Testis (tissue), 5 donors: ENCODE measurements at regions of chr3 and their contacts with region 1.

Region 1: DNA sequence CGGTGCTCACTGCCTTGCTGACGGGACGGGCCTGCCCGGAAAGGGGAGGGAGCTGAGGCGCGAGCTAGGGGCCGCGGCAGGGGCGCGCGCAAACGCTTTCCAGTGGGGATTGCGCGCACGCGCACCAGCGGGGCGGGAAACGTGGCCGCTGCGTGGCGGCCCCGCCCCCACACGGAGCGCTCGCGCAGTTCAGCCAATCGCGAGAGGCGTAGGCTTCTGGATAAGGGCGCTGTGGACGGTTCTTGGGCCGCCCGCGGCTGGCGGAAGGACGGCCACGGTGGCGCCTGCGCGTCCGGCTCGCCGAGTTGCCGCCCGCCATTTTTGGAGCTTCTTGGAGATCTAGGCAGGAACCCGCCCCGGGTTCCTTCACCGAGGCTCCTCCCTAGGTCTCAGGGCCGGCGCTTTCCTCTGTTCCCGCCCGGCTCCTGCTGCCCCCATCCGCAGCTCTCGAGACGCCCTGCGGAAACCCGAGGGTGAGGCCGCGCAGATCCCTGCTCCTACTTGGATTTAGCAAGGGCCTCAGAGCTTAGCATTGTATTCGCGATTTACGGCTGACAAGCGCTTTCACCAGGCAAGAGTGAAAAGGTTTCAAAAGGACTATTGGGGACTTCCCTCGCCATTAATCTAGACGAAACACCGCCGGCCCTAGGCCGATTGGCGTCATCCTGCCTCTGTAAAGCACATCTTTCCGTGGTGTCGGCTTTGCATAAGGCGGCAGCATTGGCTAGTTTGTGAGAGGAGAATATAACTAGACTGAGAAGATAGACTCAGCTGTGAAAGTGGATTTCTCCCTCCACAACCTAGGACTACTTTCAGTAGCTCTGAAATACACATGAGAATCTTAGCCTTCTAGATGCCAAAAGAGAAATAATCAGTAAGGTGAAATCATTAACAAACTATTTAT is 496 bp upstream of the STAG1 start:
- DNase-seq: peak; percentile 99
- H3K4me3 ChIP-seq: peak overlapping the region; percentile 90 to 94
- H3K27ac ChIP-seq: peak overlapping the region; percentile 99 to 100
- H3K4me1 ChIP-seq: peaks cover 32% of the 10 kb centered on the region
- H3K27me3 ChIP-seq: no peaks in the 10 kb centered on the region
- CTCF ChIP-seq: peak in 1 of 3 experiments; percentile 100
- POLR2A ChIP-seq: peak; percentile 77

Region 2: GRCh38 chr3:136075218-136075808 is 677.4 kb before region 1 on chr3:
- intact Hi-C with region 1: loop called (anchors 5 kb)
- DNase-seq: peak; percentile 86
- H3K4me3 ChIP-seq: no peak overlapping the region
- H3K27ac ChIP-seq: no peak overlapping the region
- H3K4me1 ChIP-seq: peaks cover 16% of the 10 kb centered on the region
- H3K27me3 ChIP-seq: no peaks in the 10 kb centered on the region
- CTCF ChIP-seq: peak; percentile 92 to 97 (median 96)
- POLR2A ChIP-seq: no peak

Region 3: DNA sequence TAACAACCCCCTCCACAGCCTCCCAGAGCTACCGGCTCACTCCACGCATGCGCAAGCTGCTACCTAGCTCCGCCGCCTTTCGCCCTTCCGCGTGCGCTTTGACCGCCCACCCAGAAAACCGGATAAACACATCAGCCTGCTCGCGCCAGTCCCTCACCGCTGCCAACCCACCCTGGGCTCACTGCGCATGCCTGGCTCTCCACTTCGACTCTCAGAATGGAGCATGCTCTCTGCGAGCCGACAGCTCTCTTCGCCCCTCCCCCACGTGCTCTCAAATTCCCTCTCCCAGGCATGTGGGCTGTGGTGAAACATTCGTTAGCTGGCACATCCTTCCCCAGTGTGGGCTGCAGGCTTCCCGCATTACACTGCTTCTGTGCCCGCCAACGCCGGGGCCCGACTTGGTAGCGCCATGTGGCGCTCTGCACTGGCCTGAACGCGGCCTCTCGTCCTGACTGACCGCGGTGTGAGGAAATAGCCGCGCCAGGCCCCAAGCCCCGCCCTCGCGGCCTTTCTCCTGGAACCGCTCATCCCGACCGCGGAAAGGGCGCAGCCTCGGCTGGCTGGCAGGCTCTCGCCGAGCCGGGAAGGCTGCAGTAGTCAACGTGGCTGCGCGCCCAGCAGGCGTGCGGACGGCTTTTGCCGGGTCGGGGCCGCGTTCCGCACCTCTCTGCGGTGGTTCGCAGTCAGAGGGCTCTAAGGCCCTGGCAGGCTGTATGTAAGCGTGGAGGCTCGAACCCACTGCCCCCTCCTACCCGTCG is 556.1 kb before region 1 on chr3:
- intact Hi-C with region 1: loop called (anchors 5 kb)
- DNase-seq: peak; percentile 98
- H3K4me3 ChIP-seq: peak overlapping the region; percentile 93 to 94
- H3K27ac ChIP-seq: peak overlapping the region; percentile 99 to 100
- H3K4me1 ChIP-seq: peaks cover 16% of the 10 kb centered on the region
- H3K27me3 ChIP-seq: no peaks in the 10 kb centered on the region
- CTCF ChIP-seq: no peak
- POLR2A ChIP-seq: no peak

Region 4: DNA sequence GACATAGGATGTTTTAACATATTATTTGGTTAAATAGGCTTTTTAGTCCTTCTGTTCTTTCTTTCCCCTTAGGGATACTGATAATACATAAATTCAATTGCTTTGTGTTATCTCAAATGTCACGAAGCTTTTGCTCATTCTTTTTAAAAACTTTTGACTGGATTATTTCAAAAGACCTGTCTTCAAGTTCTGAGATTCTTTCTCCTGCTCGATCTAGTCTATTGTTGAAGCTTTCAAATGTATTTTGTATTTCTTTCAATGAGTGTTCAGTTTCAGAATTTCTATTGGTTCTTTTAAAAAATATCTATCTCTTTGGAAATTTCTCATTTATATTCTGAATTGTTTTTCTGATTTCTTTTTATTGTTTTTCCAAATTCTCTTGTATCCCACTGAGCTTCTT is 222.0 kb after region 1 on chr3:
- intact Hi-C with region 1: no loop called
- DNase-seq: no peak
- H3K4me3 ChIP-seq: no peak overlapping the region
- H3K27ac ChIP-seq: no peak overlapping the region
- H3K4me1 ChIP-seq: no peaks in the 10 kb centered on the region
- H3K27me3 ChIP-seq: no peaks in the 10 kb centered on the region
- CTCF ChIP-seq: no peak
- POLR2A ChIP-seq: no peak

Region 5: GRCh38 chr3:137013955-137014688 is 261.4 kb after region 1 on chr3:
- intact Hi-C with region 1: loop called (anchors 10 kb)
- DNase-seq: peak; percentile 96
- H3K4me3 ChIP-seq: peak overlapping the region; percentile 51 to 54
- H3K27ac ChIP-seq: peak overlapping the region; percentile 75 to 97
- H3K4me1 ChIP-seq: peaks cover 4% of the 10 kb centered on the region
- H3K27me3 ChIP-seq: no peaks in the 10 kb centered on the region
- CTCF ChIP-seq: peak; percentile 97 to 99 (median 98)
- POLR2A ChIP-seq: no peak

Region 6: DNA sequence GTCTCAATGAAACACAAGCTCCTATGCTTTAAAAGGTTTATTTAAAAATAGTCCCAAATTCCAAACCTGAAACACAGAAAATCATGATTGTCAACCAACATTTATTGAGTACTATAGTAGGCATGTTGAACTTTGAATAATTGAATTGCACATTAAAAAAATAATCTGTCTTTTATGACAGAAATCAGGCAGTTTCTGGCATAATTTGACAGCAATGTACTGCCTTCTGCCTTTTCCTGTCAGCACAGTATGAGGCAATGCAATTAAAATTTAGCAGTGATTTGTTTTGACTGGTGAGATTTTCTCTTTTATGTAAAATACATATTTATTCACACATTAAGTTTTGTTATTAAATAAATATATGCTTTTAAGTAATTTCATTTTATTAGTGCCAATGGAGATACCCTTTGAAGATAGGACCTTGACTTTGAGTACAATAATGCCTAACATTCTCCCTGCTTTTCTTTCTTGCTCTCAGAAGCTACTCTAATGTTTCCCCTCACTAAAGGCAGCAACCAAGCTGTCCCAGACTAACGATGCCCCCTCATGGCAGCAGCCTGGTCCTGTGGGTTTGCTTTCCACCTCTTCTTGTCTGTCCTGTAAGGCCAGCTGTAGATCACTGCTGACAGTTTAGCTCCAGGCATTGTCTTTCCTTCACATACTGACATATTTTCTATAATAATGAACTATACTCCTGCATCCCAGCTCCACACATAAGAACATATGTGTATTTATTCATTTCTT is 551.8 kb after region 1 on chr3:
- intact Hi-C with region 1: no loop called
- DNase-seq: peak; percentile 16
- H3K4me3 ChIP-seq: no peak overlapping the region
- H3K27ac ChIP-seq: no peak overlapping the region
- H3K4me1 ChIP-seq: no peaks in the 10 kb centered on the region
- H3K27me3 ChIP-seq: no peaks in the 10 kb centered on the region
- CTCF ChIP-seq: no peak
- POLR2A ChIP-seq: no peak